ENCODE measurements at regions of chr1 and their contacts with region 1.

Region 1: DNA sequence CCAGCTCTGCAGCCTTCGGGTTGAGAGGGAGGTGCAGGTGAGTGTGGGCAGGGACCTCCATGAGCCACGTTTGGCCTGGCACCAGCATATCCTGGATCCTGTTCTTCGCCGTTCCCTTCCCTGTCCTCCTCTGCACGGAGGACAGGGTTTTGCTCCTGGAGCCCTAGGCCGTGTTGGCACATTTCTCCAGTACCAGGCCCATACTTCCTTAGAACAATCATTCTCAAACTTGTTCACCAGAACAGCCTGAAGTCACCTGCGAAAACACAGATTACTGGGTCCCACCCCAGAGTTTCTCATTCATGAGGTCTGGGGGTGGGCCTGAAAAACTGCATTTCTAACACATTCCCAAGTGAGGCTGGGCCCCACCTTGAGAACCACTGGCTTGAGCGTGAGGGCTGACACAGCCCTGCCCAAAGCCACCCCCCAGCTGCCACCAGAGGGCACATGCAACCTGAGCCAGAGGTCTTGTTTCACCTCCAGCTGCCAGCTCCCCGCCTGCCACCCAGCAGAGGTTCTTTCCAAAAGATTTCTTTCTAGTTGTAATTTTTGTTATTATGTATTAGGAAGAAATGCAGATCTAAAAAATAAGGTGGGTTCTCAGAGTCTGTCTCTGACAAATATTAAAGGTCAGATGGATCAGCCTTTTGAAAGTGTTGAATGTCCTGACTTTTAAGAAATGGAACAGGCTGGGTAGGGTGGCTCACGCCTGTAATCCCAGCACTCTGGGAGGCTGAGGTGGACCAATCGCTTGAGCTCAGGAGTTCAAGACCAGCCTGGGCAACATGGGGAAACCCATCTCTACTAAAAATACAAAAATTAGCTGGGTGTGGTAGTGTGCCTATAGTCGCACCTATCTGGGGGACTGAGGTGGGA is 39.6 kb upstream of the LDLRAP1 start:
- DNase-seq: peak; percentile 75
- H3K4me3 Mint-ChIP-seq: no peak overlapping the region
- H3K27ac Mint-ChIP-seq: no peak overlapping the region
- H3K4me1 Mint-ChIP-seq: no peaks in the 10 kb centered on the region
- H3K27me3 Mint-ChIP-seq: no peaks in the 10 kb centered on the region
- CTCF ChIP-seq: peak; percentile 39

Region 2: GRCh38 chr1:25556791-25557476 is 53.1 kb after region 1 on chr1:
- CTCF ChIA-PET with region 1: no interaction called
- intact Hi-C with region 1: no loop called
- DNase-seq: peak; percentile 52
- H3K4me3 Mint-ChIP-seq: no peak overlapping the region
- H3K27ac Mint-ChIP-seq: no peak overlapping the region
- H3K4me1 Mint-ChIP-seq: no peaks in the 10 kb centered on the region
- H3K27me3 Mint-ChIP-seq: no peaks in the 10 kb centered on the region
- CTCF ChIP-seq: no peak

Region 3: DNA sequence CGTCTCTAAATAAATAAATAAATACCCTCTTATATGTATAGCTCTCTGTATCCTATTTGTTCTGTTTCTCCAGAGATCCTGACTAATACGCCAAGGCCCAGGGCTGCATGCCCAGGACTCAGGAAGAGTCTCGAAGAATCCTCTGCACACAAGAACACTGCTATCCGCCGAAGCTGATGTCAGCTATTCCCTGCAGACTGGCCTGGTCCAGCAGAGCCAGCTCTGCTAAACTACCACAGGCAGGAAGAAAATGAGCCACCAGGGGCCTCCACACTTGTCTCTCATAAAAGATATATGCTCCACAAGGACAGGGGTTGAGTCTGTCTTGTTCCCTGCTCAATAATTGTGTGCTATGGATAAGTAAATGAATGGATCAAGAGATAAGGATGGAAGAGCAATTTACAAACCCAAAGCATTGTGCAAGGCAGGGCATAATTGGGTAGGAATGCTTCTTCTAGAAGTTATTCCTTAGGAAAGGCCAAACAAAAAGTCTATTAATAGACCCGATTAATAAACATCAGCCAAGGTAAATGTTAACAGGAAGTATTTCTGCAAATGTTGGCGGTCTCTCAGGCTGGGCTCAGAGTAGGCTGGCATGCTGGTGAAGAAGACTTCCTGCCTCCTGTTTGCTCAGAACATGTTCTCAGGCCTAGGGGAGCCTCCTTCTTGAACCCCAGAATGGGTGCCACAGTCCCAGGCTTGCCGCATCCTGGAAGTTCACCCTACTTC is 86.5 kb after region 1 on chr1:
- CTCF ChIA-PET with region 1: no interaction called
- intact Hi-C with region 1: no loop called
- DNase-seq: no peak
- H3K4me3 Mint-ChIP-seq: no peak overlapping the region
- H3K27ac Mint-ChIP-seq: no peak overlapping the region
- H3K4me1 Mint-ChIP-seq: no peaks in the 10 kb centered on the region
- H3K27me3 Mint-ChIP-seq: peaks cover 27% of the 10 kb centered on the region
- CTCF ChIP-seq: no peak

Region 4: GRCh38 chr1:25810341-25811299 is 306.8 kb after region 1 on chr1:
- CTCF ChIA-PET with region 1: no interaction called
- intact Hi-C with region 1: loop called (anchors 5 kb)
- DNase-seq: peak; percentile 71
- H3K4me3 Mint-ChIP-seq: no peak overlapping the region
- H3K27ac Mint-ChIP-seq: no peak overlapping the region
- H3K4me1 Mint-ChIP-seq: no peaks in the 10 kb centered on the region
- H3K27me3 Mint-ChIP-seq: no peaks in the 10 kb centered on the region
- CTCF ChIP-seq: peak; percentile 86

Measured in Calu3 (cell line).